H1 (cell line): ENCODE measurements at regions of chr2 and their contacts with region 1.

Region 1: GRCh38 chr2:162002623-162003240 is 71.3 kb downstream of the DPP4 start:
- DNase-seq: no peak
- H3K4me3 ChIP-seq: peak overlapping the region in 2 of 4 experiments; percentile 6 to 8; a peak in 1 of 8 replicates
- H3K27ac ChIP-seq: 0 out of 2 replicates have a peak overlapping the region, but pooled peaks have one; percentile 38
- H3K4me1 ChIP-seq: peaks cover 5 to 18% (median 12%) of the 10 kb centered on the region in 4 experiments; a peak in 6 of 7 replicates
- H3K27me3 ChIP-seq: no peaks in the 10 kb centered on the region
- CTCF ChIP-seq: no peak
- EP300 ChIP-seq: no peak
- POLR2A ChIP-seq: no peak
- RAD21 ChIP-seq: no peak

Region 2: GRCh38 chr2:162018530-162018929 is 15.8 kb after region 1 on chr2:
- CTCF ChIA-PET with region 1: interaction called, 20 read pairs
- POLR2A ChIA-PET with region 1: no interaction called
- DNase-seq: no peak
- H3K4me3 ChIP-seq: no peak overlapping the region
- H3K27ac ChIP-seq: no peak overlapping the region
- H3K4me1 ChIP-seq: peaks cover 0 to 3% (median 0%) of the 10 kb centered on the region in 4 experiments; a peak in 1 of 7 replicates
- H3K27me3 ChIP-seq: no peaks in the 10 kb centered on the region
- CTCF ChIP-seq: no peak
- EP300 ChIP-seq: no peak
- POLR2A ChIP-seq: no peak
- RAD21 ChIP-seq: no peak